Activated CD4-positive, alpha-beta T cell treated with anti-CD3 and anti-CD28 coated beads, Interleukin-2, amount 10 ng/mL, durations not matched to agents 7 days and 5 days (primary cell): ENCODE measurements at regions of chr2 and their contacts with region 1.

Region 1: GRCh38 chr2:111687911-111688881 is 195.8 kb downstream of the ANAPC1 start:
- DNase-seq: no peak
- H3K4me3 Mint-ChIP-seq: no peak overlapping the region
- H3K27ac Mint-ChIP-seq: no peak overlapping the region
- H3K4me1 Mint-ChIP-seq: no peaks in the 10 kb centered on the region
- H3K27me3 Mint-ChIP-seq: peaks cover 11% of the 10 kb centered on the region

Region 2: DNA sequence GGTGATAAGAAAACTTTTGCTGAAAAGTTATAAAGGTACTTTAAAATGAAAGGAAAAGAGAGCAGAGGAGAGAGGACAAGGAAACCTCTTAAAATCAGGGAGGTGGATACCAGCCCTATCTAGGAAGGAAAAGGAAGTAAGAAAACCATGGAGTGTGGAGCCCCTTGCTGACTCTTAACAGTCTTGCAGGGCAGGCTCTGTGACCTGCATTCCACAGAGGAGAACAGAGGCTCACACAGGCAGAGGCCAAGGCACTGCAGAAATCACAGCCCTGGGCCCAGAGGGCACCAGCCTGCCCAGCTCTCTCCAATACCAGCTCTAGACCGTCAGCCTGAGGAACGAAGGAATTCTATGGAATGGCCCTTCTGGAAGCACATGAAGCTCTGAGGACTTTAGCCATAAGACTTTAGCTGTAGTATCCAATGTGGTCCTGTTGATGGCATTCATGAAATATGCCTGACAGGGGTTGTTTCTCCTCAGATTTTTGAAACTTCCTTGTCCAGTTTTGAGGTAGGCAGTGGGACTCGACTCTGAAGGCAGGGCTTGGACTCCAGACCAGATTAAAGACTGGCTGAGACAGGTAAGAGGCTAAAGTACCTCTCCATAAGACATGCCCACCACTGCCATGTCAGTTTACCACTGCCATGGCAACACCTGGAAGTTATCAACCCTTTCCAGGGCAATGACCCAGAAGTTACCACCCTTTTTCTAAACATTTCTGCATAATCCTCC is 20.5 kb before region 1 on chr2:
- CTCF ChIA-PET with region 1: no interaction called
- POLR2A ChIA-PET with region 1: no interaction called
- DNase-seq: no peak
- H3K4me3 Mint-ChIP-seq: no peak overlapping the region
- H3K27ac Mint-ChIP-seq: no peak overlapping the region
- H3K4me1 Mint-ChIP-seq: peaks cover 10% of the 10 kb centered on the region
- H3K27me3 Mint-ChIP-seq: peaks cover 8% of the 10 kb centered on the region

Region 3: DNA sequence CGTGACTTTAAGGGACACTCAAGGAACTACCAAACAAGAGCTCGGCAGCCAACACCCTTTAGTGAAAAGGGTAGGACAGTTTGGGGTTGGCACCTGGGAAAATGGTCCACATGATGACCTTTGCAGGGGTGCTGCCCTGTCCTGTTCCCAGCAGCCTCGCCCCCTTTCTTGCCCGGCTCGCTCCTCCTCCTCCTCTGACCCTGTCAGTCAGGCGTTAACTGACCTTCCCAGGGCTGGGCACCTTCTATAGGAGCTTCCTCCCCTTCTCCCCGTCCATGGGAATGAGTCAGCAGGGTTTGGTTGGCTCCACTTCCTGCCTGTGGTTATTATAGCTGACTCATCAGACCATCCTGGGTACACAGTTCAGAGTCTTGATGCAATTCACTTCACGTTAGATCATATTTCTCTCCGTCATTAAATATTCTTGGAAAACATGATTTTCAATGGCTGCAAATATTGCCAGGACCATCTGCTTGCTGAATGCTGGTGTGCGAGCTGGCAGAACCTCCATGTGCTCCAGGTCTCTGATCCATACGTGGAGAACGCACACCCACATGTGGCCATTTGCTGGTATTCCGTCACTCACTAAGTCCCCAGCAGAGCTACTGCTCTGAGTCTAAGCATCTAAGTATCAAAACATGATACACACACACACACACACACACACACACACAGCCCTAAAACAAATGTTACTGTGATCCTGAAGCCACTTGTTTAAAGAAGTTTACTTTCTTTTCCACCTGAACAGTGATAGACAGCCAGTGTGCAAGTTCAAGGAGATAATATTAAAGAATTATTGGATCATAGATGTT is 10.8 kb after region 1 on chr2:
- CTCF ChIA-PET with region 1: interaction called, 38 read pairs
- POLR2A ChIA-PET with region 1: no interaction called
- DNase-seq: peak; percentile 62
- H3K4me3 Mint-ChIP-seq: peak overlapping the region; percentile 26
- H3K27ac Mint-ChIP-seq: peak overlapping the region; percentile 77
- H3K4me1 Mint-ChIP-seq: peaks cover 46% of the 10 kb centered on the region
- H3K27me3 Mint-ChIP-seq: peaks cover 12% of the 10 kb centered on the region